ENCODE measurements at regions of chr12 and their contacts with region 1.

Region 1: DNA sequence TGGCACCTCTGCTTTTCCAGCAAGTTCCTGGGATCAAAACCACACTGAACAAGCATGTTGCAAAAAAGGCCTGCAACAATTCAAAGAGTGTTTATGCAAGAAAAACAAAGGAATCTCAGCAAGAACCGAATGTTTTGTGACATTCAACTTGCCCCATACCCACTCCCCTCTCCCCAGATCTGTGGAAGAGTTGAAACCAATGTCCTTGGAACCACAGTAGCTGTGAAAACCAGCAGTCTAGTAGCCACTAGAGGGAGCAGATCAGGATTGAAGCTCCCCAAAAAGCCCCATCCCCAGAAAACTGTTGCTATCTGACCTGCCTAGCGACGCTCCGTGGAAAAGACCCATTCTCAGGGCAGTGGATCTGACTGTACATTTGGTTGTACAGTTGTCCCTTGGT is 27.1 kb downstream of the PRKAB1 start:
- DNase-seq: no peak
- ATAC-seq: no peak
- H3K4me3 ChIP-seq: no peak overlapping the region
- H3K27ac ChIP-seq: no peak overlapping the region
- H3K4me1 ChIP-seq: no peaks in the 10 kb centered on the region
- H3K27me3 ChIP-seq: no peaks in the 10 kb centered on the region

Region 2: GRCh38 chr12:119835068-119835467 is 140.0 kb after region 1 on chr12:
- intact Hi-C with region 1: no loop called
- DNase-seq: no peak
- ATAC-seq: no peak
- H3K4me3 ChIP-seq: no peak overlapping the region
- H3K27ac ChIP-seq: no peak overlapping the region
- H3K4me1 ChIP-seq: peaks cover 1% of the 10 kb centered on the region
- H3K27me3 ChIP-seq: no peaks in the 10 kb centered on the region

Region 3: DNA sequence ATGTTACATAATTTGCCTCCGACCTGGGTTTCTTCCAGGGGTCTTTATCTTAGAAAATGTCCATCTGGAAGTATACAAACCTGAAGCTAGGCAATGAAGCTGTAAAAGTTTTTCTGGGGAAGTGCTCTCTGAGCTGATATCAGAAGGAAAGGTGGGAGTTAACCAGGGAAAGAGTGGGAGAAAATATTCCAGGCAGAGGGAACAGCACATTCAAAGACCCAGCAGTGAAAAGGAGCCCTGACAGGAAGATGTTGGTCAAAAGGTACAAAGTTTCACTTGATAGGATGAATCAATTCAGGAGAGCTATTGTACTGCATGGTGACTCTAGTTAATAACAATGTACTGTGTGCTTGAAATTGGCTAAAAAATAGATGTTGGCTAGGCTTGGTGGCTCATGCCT is 199.9 kb after region 1 on chr12:
- intact Hi-C with region 1: loop called in 1 of 4 experiments (anchors 10 kb)
- DNase-seq: no peak
- ATAC-seq: no peak
- H3K4me3 ChIP-seq: no peak overlapping the region
- H3K27ac ChIP-seq: no peak overlapping the region
- H3K4me1 ChIP-seq: no peaks in the 10 kb centered on the region
- H3K27me3 ChIP-seq: no peaks in the 10 kb centered on the region